Mammary epithelial cell (primary cell): ENCODE measurements at regions of chr14 and their contacts with region 1.

Region 1: DNA sequence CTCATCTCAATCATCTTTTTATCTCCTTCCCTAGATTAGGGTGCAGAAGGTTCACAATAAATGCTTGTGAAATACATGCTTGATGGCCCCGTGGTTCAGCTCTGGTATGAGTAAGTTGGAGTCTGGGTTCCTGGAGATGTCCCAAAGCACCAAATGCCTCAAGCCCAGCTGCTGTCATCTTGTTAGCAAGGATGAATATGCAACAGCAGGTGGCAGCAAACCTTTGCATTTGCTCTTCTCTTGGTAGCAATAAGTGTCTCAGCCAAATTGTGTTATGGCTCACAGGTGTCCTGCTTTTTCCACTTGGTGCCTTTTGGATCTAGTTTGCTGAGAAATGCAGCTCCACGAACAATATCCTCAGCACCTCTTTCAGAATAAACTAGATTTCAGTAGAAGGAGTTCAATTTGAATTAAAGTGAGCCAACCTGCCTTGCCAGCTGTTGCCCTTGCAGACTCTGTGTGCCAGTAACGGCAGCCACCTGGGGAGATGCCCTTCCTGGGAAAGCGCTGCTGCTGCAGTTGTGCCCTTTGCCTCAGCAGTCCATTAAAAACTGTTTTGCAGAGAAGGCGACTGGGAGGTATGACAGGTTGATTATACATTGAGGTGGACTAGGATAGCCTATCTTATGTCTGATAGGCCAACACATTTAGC is 417.3 kb downstream of the SNAPC1 start:
- DNase-seq: peak; percentile 66
- H3K4me3 ChIP-seq: no peak overlapping the region
- H3K27ac ChIP-seq: no peak overlapping the region
- H3K4me1 ChIP-seq: no peaks in the 10 kb centered on the region
- H3K27me3 ChIP-seq: no peaks in the 10 kb centered on the region
- CTCF ChIP-seq: peak; percentile 67 to 81

Region 2: GRCh38 chr14:62557416-62557815 is 377.9 kb after region 1 on chr14:
- CTCF ChIA-PET with region 1: no interaction called
- dilution Hi-C with region 1: no loop called
- in situ Hi-C with region 1: no loop called
- intact Hi-C with region 1: no loop called
- DNase-seq: no peak
- H3K4me3 ChIP-seq: no peak overlapping the region
- H3K27ac ChIP-seq: no peak overlapping the region
- H3K4me1 ChIP-seq: no peaks in the 10 kb centered on the region
- H3K27me3 ChIP-seq: no peaks in the 10 kb centered on the region
- CTCF ChIP-seq: no peak

Region 3: GRCh38 chr14:62706217-62706616 is 526.7 kb after region 1 on chr14:
- CTCF ChIA-PET with region 1: no interaction called
- dilution Hi-C with region 1: no loop called
- in situ Hi-C with region 1: no loop called
- intact Hi-C with region 1: loop called (anchors 10 kb)
- DNase-seq: no peak
- H3K4me3 ChIP-seq: no peak overlapping the region
- H3K27ac ChIP-seq: no peak overlapping the region
- H3K4me1 ChIP-seq: no peaks in the 10 kb centered on the region
- H3K27me3 ChIP-seq: no peaks in the 10 kb centered on the region
- CTCF ChIP-seq: no peak

Region 4: GRCh38 chr14:63039800-63040380 is 860.4 kb after region 1 on chr14:
- CTCF ChIA-PET with region 1: no interaction called
- dilution Hi-C with region 1: no loop called
- in situ Hi-C with region 1: loop called in 1 of 2 experiments (anchors 10 kb)
- intact Hi-C with region 1: loop called (anchors 1 kb)
- DNase-seq: peak; percentile 74
- H3K4me3 ChIP-seq: no peak overlapping the region
- H3K27ac ChIP-seq: no peak overlapping the region
- H3K4me1 ChIP-seq: no peaks in the 10 kb centered on the region
- H3K27me3 ChIP-seq: no peaks in the 10 kb centered on the region
- CTCF ChIP-seq: peak; percentile 40 to 65

Region 5: DNA sequence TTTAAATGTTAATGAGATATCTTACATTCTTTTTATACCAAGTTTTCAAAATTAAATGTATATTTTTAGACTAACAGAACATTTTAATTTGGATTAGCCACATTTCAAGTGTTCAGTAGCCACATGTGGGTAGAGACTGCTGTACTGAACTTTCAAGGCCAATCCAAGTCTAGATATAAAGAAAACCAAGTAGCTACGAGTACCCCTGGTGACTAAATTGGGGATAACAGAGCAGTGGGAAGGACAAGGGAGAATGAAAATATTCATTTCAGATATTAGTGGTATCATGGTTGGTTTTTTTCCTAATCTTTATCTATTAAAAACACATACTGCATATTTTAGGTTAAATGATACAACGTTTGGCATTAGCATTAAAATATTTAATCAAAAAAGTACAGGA is 955.3 kb after region 1 on chr14:
- CTCF ChIA-PET with region 1: interaction called, 6 read pairs
- dilution Hi-C with region 1: no loop called
- in situ Hi-C with region 1: loop called in 1 of 2 experiments (anchors 25 kb)
- intact Hi-C with region 1: loop called (anchors 10 kb)
- DNase-seq: no peak
- H3K4me3 ChIP-seq: no peak overlapping the region
- H3K27ac ChIP-seq: no peak overlapping the region
- H3K4me1 ChIP-seq: no peaks in the 10 kb centered on the region
- H3K27me3 ChIP-seq: no peaks in the 10 kb centered on the region
- CTCF ChIP-seq: peak; percentile 39 to 41

Region 6: GRCh38 chr14:63276492-63277342 is 1097.2 kb after region 1 on chr14:
- CTCF ChIA-PET with region 1: no interaction called
- dilution Hi-C with region 1: no loop called
- in situ Hi-C with region 1: loop called (anchors 10 kb)
- intact Hi-C with region 1: loop called (anchors 1 kb)
- DNase-seq: peak; percentile 65
- H3K4me3 ChIP-seq: no peak overlapping the region
- H3K27ac ChIP-seq: no peak overlapping the region
- H3K4me1 ChIP-seq: no peaks in the 10 kb centered on the region
- H3K27me3 ChIP-seq: no peaks in the 10 kb centered on the region
- CTCF ChIP-seq: peak; percentile 75 to 86